ENCODE measurements at regions of chr9 and their contacts with region 1.

Region 1: GRCh38 chr9:81754245-81754644 is 64.9 kb upstream of the TLE1 start:
- DNase-seq: no peak
- H3K4me3 ChIP-seq: no peak overlapping the region
- H3K27me3 ChIP-seq: no peaks in the 10 kb centered on the region
- CTCF ChIP-seq: no peak

Region 2: GRCh38 chr9:81729135-81729534 is 25.1 kb before region 1 on chr9:
- CTCF ChIA-PET with region 1: no interaction called
- POLR2A ChIA-PET with region 1: no interaction called
- DNase-seq: no peak
- H3K4me3 ChIP-seq: no peak overlapping the region
- H3K27me3 ChIP-seq: no peaks in the 10 kb centered on the region; the same call in 1 of the 2 replicates
- CTCF ChIP-seq: no peak

Region 3: GRCh38 chr9:82421498-82421897 is 667.3 kb after region 1 on chr9:
- CTCF ChIA-PET with region 1: no interaction called
- POLR2A ChIA-PET with region 1: interaction called, 17 read pairs
- DNase-seq: no peak
- H3K4me3 ChIP-seq: no peak overlapping the region
- H3K27me3 ChIP-seq: no peaks in the 10 kb centered on the region
- CTCF ChIP-seq: no peak

Measured in BJ (cell line).